AG04449 (cell line): ENCODE measurements at regions of chr16 and their contacts with region 1.

Region 1: GRCh38 chr16:66608241-66609138 is 4.0 kb downstream of the CMTM3 start:
- DNase-seq: peak; percentile 51
- H3K4me3 ChIP-seq: no peak overlapping the region
- CTCF ChIP-seq: peak; percentile 95

Region 2: GRCh38 chr16:66580605-66581209 is 27.8 kb before region 1 on chr16:
- CTCF ChIA-PET with region 1: interaction called, 14 read pairs
- POLR2A ChIA-PET with region 1: no interaction called
- DNase-seq: peak; percentile 58
- H3K4me3 ChIP-seq: no peak overlapping the region
- CTCF ChIP-seq: peak; percentile 32

Region 3: GRCh38 chr16:66618588-66619375 is 10.3 kb after region 1 on chr16:
- CTCF ChIA-PET with region 1: interaction called, 96 read pairs
- POLR2A ChIA-PET with region 1: interaction called, 7 read pairs
- DNase-seq: peak; percentile 95
- H3K4me3 ChIP-seq: no peak overlapping the region
- CTCF ChIP-seq: no peak

Region 4: GRCh38 chr16:66660422-66661209 is 52.1 kb after region 1 on chr16:
- CTCF ChIA-PET with region 1: interaction called, 62 read pairs
- POLR2A ChIA-PET with region 1: no interaction called
- DNase-seq: no peak
- H3K4me3 ChIP-seq: no peak overlapping the region
- CTCF ChIP-seq: peak; percentile 53

Region 5: GRCh38 chr16:66740010-66740409 is 131.5 kb after region 1 on chr16:
- CTCF ChIA-PET with region 1: interaction called, 30 read pairs
- POLR2A ChIA-PET with region 1: no interaction called
- DNase-seq: no peak
- H3K4me3 ChIP-seq: no peak overlapping the region
- CTCF ChIP-seq: peak; percentile 44